CD14-positive monocyte (primary cell): ENCODE measurements at regions of chrX and their contacts with region 1.

Region 1: GRCh38 chrX:54999717-55000598 is at the start of gene APEX2:
- DNase-seq: peak; percentile 89 to 91 (median 90)
- H3K4me3 ChIP-seq: peak within 1 kb of the TSS; percentile 72 to 84 (median 80)
- H3K4me3 Mint-ChIP-seq: peak within 1 kb of the TSS; percentile 84 to 95
- H3K27ac ChIP-seq: peak within 1 kb of the TSS; percentile 89 to 96
- H3K27ac Mint-ChIP-seq: peak within 1 kb of the TSS; percentile 90 to 98 (median 95)
- H3K4me1 ChIP-seq: peaks cover 14 to 17% of the 10 kb centered on the region in 2 donors
- H3K4me1 Mint-ChIP-seq: peaks cover 18% of the 10 kb centered on the region
- H3K27me3 ChIP-seq: peaks cover 0 to 2% of the 10 kb centered on the region in 2 donors
- H3K27me3 Mint-ChIP-seq: peaks cover 0 to 7% (median 5%) of the 10 kb centered on the region in 3 donors
- CTCF ChIP-seq: no peak
- polyA plus RNA-seq, gene APEX2: 13.3 to 17.8 (median 14.4) TPM

Region 2: DNA sequence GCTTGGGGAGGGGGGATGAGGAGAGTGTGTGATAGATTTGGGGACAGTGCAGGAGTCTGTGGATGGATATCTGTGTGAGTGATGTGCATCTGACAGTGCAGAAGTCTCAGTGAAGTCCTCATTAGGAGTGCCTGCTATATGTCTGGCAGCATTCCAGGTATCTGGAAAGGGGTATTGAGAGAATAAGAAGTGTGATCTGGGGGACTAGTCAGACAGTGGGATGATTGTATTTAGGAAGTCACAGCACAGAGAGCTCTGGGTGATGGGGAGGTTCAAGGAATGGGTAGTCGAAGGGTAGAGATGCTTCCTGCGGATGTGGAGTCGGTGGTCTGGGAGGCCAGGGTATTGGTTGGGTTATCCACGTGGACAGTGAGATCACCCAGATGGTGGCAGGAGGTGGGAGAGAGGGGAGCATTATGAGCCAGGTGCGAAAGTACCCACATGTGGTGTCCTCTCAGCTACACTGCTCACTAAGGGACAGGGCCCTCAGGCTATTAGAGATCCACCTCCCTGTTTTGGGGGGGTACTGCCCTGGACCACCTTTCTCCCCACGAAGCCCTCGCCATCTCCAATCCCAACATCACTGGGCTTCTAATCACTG is 182.6 kb before region 1 on chrX:
- intact Hi-C with region 1: loop called in 1 of 2 experiments (anchors 10 kb)
- DNase-seq: no peak
- H3K4me3 ChIP-seq: no peak overlapping the region
- H3K4me3 Mint-ChIP-seq: no peak overlapping the region
- H3K27ac ChIP-seq: no peak overlapping the region
- H3K27ac Mint-ChIP-seq: no peak overlapping the region
- H3K4me1 ChIP-seq: no peaks in the 10 kb centered on the region
- H3K4me1 Mint-ChIP-seq: peaks cover 3% of the 10 kb centered on the region
- H3K27me3 ChIP-seq: no peaks in the 10 kb centered on the region
- H3K27me3 Mint-ChIP-seq: peaks cover 0 to 2% (median 1%) of the 10 kb centered on the region in 3 donors
- CTCF ChIP-seq: no peak

Region 3: GRCh38 chrX:55160685-55161552 is 161.0 kb after region 1 on chrX:
- intact Hi-C with region 1: loop called in 1 of 2 experiments (anchors 10 kb)
- DNase-seq: peak; percentile 73 to 78 (median 78)
- H3K4me3 ChIP-seq: peak overlapping the region; percentile 34 to 76 (median 60)
- H3K4me3 Mint-ChIP-seq: peak overlapping the region; percentile 86 to 93
- H3K27ac ChIP-seq: peak overlapping the region; percentile 80 to 81
- H3K27ac Mint-ChIP-seq: peak overlapping the region; percentile 91 to 98 (median 95)
- H3K4me1 ChIP-seq: peaks cover 12 to 14% of the 10 kb centered on the region in 2 donors
- H3K4me1 Mint-ChIP-seq: peaks cover 12% of the 10 kb centered on the region
- H3K27me3 ChIP-seq: no peaks in the 10 kb centered on the region
- H3K27me3 Mint-ChIP-seq: peaks cover 6 to 12% (median 7%) of the 10 kb centered on the region in 3 donors
- CTCF ChIP-seq: peak; percentile 65